ENCODE measurements at regions of chr19 and their contacts with region 1.

Region 1: DNA sequence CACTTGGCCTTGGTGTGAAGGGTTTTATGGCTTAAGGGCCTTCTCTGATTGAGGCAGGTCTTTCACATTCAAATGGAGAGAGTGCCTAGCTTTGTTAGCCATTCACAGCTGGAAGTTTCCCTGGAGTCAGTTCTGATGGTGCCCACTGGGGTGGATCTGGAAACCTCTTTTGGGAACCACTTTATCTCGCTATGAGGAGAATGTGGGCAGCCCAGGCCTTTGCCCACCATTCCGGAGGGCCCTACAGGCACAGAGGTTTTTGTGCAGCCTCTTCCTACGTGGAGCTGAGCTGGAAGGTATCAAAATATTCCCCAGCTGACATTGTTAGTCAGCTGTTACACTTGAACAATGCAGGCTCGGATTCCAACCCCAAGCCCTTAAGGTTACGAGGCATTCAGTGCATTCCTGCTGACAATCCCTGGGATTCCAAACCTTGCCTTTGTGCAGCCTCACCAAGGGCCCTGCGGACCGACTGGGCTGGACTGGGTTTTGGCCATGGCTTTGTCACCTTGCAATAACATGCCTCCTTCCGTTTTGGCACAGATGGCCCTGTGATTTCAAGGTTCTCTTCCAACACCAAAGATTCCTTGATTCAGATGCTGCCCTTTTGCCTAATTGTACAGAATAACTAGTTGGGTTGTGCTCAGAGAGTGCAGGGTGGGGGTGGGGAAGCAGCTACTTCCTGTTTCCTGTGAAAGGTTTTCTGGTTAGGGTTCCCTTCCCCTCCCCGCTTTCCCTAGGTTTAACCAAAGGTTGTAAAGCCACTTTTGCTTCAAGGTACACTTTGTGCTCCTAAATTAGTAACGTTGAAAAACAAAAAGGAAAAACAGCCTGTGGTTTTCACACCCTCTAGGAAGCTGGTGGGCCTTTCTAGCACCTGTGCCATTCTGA is 27.0 kb downstream of the SAE1 start:
- DNase-seq: peak in 1 of 2 donors; percentile 79
- ATAC-seq: peak; percentile 56 to 76 (median 71)
- H3K4me3 ChIP-seq: peak overlapping the region; percentile 4
- H3K4me3 Mint-ChIP-seq: peak overlapping the region; percentile 80
- H3K27ac ChIP-seq: peak overlapping the region; percentile 68
- H3K27ac Mint-ChIP-seq: peak overlapping the region; percentile 89 to 93
- H3K4me1 ChIP-seq: peaks cover 51% of the 10 kb centered on the region
- H3K4me1 Mint-ChIP-seq: peaks cover 34 to 46% of the 10 kb centered on the region in 2 donors
- H3K27me3 ChIP-seq: no peaks in the 10 kb centered on the region
- H3K27me3 Mint-ChIP-seq: no peaks in the 10 kb centered on the region
- CTCF ChIP-seq: no peak

Region 2: DNA sequence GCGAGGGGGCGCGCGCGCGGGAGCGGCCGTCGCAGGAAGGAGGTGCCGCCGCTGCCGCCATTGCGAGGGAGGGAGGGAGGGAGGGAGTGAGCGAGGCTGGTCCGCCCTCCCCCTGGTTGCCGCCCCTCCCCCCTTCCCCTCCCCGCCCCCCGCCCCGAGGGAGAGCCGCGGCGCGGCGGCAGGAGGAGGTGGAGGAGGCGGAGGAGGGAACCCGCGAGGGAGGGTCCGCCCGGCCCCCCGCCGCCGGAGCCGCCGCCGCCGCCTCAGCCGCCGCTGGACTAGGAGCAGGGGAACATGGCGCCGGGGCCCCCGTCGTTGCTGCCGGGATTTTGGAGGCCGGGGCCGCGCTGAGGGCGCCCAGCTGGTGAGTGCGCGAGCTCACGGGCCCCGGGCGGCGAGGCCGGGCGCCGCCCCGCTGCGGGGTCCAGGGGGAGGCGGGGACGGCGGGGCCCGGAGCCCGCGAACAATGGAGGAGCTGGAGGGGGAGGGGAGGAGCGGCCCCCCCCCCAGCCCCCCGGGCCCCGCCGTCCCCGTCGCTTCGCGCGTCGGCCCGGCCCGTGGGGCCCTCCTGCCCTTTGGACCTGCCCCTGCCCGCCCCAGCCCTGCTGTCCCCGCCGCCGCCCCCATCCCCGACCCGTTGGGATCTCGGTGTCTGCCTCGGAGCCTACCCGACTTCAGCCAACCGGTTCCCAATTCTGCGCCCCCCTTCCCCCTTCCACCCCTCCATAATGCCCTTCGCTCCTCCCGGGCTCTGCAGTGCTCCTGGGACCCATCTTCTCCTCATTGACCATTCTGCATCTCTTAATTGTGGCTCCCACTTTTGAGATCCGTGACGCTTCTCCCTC is 296.6 kb before region 1 on chr19 and contains the start of gene ARHGAP35:
- intact Hi-C with region 1: no loop called
- DNase-seq: peak in 1 of 2 donors; percentile 91
- ATAC-seq: peak; percentile 52 to 74 (median 59)
- H3K4me3 ChIP-seq: peak within 1 kb of the TSS; percentile 83
- H3K4me3 Mint-ChIP-seq: peak within 1 kb of the TSS; percentile 89
- H3K27ac ChIP-seq: peak within 1 kb of the TSS; percentile 84
- H3K27ac Mint-ChIP-seq: peak within 1 kb of the TSS; percentile 91 to 94
- H3K4me1 ChIP-seq: peaks cover 41% of the 10 kb centered on the region
- H3K4me1 Mint-ChIP-seq: peaks cover 12 to 18% of the 10 kb centered on the region in 2 donors
- H3K27me3 ChIP-seq: no peaks in the 10 kb centered on the region
- H3K27me3 Mint-ChIP-seq: no peaks in the 10 kb centered on the region
- CTCF ChIP-seq: no peak
- total RNA-seq, gene ARHGAP35: 40.2 to 66.2 (median 48.5) TPM

Region 3: DNA sequence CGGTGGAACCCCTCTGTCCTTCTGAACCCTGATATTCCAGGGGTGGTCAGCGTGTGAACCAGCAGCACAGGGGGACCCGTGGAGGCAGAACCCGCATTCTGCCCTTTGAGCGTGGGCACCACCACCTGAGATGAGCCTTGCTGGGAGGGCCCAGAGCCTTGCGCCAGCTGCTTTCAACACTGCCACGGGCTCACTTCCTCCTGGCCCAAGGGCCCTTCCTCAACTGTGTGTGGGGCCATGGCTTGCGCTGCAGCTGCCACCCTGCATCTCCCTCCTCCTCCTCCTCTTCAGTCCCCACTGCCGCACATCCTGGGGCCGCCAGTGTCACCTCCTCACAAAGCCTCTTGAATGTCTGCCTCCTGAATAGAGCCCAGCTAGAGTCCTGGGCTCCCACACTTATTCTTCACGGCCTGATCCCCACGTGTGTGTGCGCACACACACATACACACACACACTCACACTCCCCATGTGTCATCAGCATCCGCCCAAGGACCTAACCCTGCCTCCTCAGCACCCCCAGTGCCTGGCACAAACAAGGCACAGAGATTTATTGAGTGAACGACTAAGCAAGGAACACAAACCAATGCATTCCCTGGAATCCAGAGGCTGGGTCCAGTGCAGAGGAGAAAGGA is 82.4 kb before region 1 on chr19:
- intact Hi-C with region 1: no loop called
- DNase-seq: no peak
- ATAC-seq: peak in 1 of 3 donors; percentile 57
- H3K4me3 ChIP-seq: no peak overlapping the region
- H3K4me3 Mint-ChIP-seq: no peak overlapping the region
- H3K27ac ChIP-seq: no peak overlapping the region
- H3K27ac Mint-ChIP-seq: peak overlapping the region in 1 of 2 donors; percentile 61
- H3K4me1 ChIP-seq: peaks cover 10% of the 10 kb centered on the region
- H3K4me1 Mint-ChIP-seq: peaks cover 12 to 16% of the 10 kb centered on the region in 2 donors
- H3K27me3 ChIP-seq: no peaks in the 10 kb centered on the region
- H3K27me3 Mint-ChIP-seq: no peaks in the 10 kb centered on the region
- CTCF ChIP-seq: no peak

Region 4: GRCh38 chr19:47107202-47107940 is 50.3 kb before region 1 on chr19:
- intact Hi-C with region 1: no loop called
- DNase-seq: peak in 1 of 2 donors; percentile 68
- ATAC-seq: peak; percentile 16 to 49 (median 42)
- H3K4me3 ChIP-seq: no peak overlapping the region
- H3K4me3 Mint-ChIP-seq: peak overlapping the region; percentile 52
- H3K27ac ChIP-seq: peak overlapping the region; percentile 44
- H3K27ac Mint-ChIP-seq: peak overlapping the region; percentile 99 to 100
- H3K4me1 ChIP-seq: peaks cover 26% of the 10 kb centered on the region
- H3K4me1 Mint-ChIP-seq: peaks cover 63 to 66% of the 10 kb centered on the region in 2 donors
- H3K27me3 ChIP-seq: no peaks in the 10 kb centered on the region
- H3K27me3 Mint-ChIP-seq: no peaks in the 10 kb centered on the region
- CTCF ChIP-seq: no peak

Region 5: GRCh38 chr19:47176627-47177090 is 19.0 kb after region 1 on chr19:
- intact Hi-C with region 1: loop called (anchors 1 kb)
- DNase-seq: peak in 1 of 2 donors; percentile 74
- ATAC-seq: peak; percentile 67 to 84 (median 83)
- H3K4me3 ChIP-seq: no peak overlapping the region
- H3K4me3 Mint-ChIP-seq: peak overlapping the region; percentile 60
- H3K27ac ChIP-seq: peak overlapping the region; percentile 43
- H3K27ac Mint-ChIP-seq: peak overlapping the region; percentile 50 to 66
- H3K4me1 ChIP-seq: peaks cover 28% of the 10 kb centered on the region
- H3K4me1 Mint-ChIP-seq: peaks cover 21 to 31% of the 10 kb centered on the region in 2 donors
- H3K27me3 ChIP-seq: no peaks in the 10 kb centered on the region
- H3K27me3 Mint-ChIP-seq: no peaks in the 10 kb centered on the region
- CTCF ChIP-seq: no peak

Region 6: GRCh38 chr19:47190167-47190727 is 32.6 kb after region 1 on chr19:
- intact Hi-C with region 1: loop called (anchors 5 kb)
- DNase-seq: peak in 1 of 2 donors; percentile 74
- ATAC-seq: no peak
- H3K4me3 ChIP-seq: no peak overlapping the region
- H3K4me3 Mint-ChIP-seq: no peak overlapping the region
- H3K27ac ChIP-seq: no peak overlapping the region
- H3K27ac Mint-ChIP-seq: peak overlapping the region; percentile 10 to 25
- H3K4me1 ChIP-seq: peaks cover 19% of the 10 kb centered on the region
- H3K4me1 Mint-ChIP-seq: peaks cover 10 to 24% of the 10 kb centered on the region in 2 donors
- H3K27me3 ChIP-seq: no peaks in the 10 kb centered on the region
- H3K27me3 Mint-ChIP-seq: no peaks in the 10 kb centered on the region
- CTCF ChIP-seq: no peak

Region 7: DNA sequence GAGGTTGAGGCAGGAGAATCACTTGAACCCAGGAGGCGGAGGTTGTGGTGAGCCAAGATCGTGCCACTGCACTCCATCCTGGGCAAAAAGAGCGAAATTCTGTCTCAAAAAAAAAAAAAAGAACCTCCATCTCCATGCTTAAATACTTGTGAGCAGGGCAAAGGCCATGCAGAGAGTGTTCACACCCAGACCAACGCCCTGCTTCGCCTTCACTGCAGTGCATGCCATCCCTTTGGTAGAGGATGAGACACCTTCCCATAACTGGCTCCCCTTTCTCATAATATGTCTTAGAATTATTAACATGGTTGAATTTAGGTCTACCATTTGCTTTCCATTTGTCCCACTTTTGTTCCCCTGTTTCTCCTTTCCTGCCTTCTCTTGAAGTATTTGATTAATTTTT is 57.9 kb after region 1 on chr19:
- intact Hi-C with region 1: no loop called
- DNase-seq: no peak
- ATAC-seq: no peak
- H3K4me3 ChIP-seq: no peak overlapping the region
- H3K4me3 Mint-ChIP-seq: no peak overlapping the region
- H3K27ac ChIP-seq: no peak overlapping the region
- H3K27ac Mint-ChIP-seq: no peak overlapping the region
- H3K4me1 ChIP-seq: peaks cover 7% of the 10 kb centered on the region
- H3K4me1 Mint-ChIP-seq: peaks cover 5% of the 10 kb centered on the region in 2 donors
- H3K27me3 ChIP-seq: no peaks in the 10 kb centered on the region
- H3K27me3 Mint-ChIP-seq: no peaks in the 10 kb centered on the region
- CTCF ChIP-seq: no peak

Region 8: GRCh38 chr19:47225746-47226425 is 68.2 kb after region 1 on chr19:
- intact Hi-C with region 1: loop called (anchors 5 kb)
- DNase-seq: peak; percentile 94 to 95
- ATAC-seq: peak; percentile 43 to 76 (median 66)
- H3K4me3 ChIP-seq: peak overlapping the region; percentile 47
- H3K4me3 Mint-ChIP-seq: peak overlapping the region; percentile 79
- H3K27ac ChIP-seq: peak overlapping the region; percentile 96
- H3K27ac Mint-ChIP-seq: no peak overlapping the region
- H3K4me1 ChIP-seq: peaks cover 45% of the 10 kb centered on the region
- H3K4me1 Mint-ChIP-seq: peaks cover 6 to 18% of the 10 kb centered on the region in 2 donors
- H3K27me3 ChIP-seq: no peaks in the 10 kb centered on the region
- H3K27me3 Mint-ChIP-seq: no peaks in the 10 kb centered on the region
- CTCF ChIP-seq: peak; percentile 26

Measured in natural killer cell (primary cell).